Panc1 (cell line): ENCODE measurements at regions of chr7 and their contacts with region 1.

Region 1: DNA sequence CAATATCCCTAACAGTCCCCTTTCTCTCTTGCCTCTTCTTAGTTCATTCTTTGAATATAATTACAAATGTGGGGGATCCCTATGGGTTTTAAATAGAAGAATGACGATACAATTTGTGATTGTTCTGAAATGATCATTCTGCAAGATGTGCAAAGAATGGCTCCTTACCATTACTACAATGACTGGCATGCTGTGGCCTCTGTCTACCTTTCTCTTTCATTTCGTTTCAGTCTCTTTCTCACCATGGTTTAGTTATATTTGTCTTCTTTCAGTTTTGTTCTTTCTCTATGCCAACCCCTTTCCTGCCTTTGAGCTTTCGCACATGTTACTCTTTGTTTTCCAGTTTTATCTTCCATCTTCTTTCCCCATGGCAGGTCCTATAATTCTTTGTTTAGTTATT is 176.5 kb downstream of the SUGCT start:
- DNase-seq: no peak
- ATAC-seq: no peak
- H3K4me3 ChIP-seq: no peak overlapping the region
- H3K27ac ChIP-seq: no peak overlapping the region
- H3K4me1 ChIP-seq: no peaks in the 10 kb centered on the region
- H3K27me3 ChIP-seq: no peaks in the 10 kb centered on the region
- CTCF ChIP-seq: no peak

Region 2: DNA sequence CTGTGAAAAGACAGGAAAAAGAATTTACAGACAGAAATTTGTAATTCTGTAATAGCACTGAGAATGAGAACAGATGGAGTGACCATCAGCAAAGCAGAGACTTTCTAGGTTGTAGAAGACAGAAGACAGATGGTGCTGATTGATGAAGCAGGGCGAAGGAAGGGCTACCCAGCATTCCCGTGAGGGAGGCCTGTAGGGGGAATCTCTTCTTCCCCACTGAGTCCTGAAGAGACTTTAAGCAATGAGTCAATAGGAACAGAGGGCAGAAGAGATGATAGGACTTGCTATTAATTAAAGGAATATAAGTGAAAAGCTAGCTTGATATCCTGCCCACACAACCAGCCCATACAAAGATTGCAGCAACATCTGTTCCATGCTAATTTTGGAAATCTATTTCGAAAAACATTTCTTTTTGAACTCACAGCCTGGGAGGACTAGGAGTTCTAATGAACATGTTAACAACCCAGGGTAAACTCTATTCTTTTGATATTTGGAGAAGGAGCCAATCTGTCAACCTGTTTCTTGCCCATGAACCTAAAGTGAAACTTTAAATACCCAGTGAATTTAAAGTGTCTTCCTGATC is 643.9 kb before region 1 on chr7:
- CTCF ChIA-PET with region 1: no interaction called
- POLR2A ChIA-PET with region 1: no interaction called
- in situ Hi-C with region 1: no loop called
- intact Hi-C with region 1: no loop called
- DNase-seq: no peak
- ATAC-seq: no peak
- H3K4me3 ChIP-seq: no peak overlapping the region
- H3K27ac ChIP-seq: no peak overlapping the region
- H3K4me1 ChIP-seq: no peaks in the 10 kb centered on the region
- H3K27me3 ChIP-seq: no peaks in the 10 kb centered on the region
- CTCF ChIP-seq: no peak

Region 3: GRCh38 chr7:40057292-40057691 is 254.0 kb before region 1 on chr7:
- CTCF ChIA-PET with region 1: no interaction called
- POLR2A ChIA-PET with region 1: no interaction called
- in situ Hi-C with region 1: no loop called
- intact Hi-C with region 1: no loop called
- DNase-seq: no peak
- ATAC-seq: no peak
- H3K4me3 ChIP-seq: no peak overlapping the region
- H3K27ac ChIP-seq: no peak overlapping the region
- H3K4me1 ChIP-seq: no peaks in the 10 kb centered on the region
- H3K27me3 ChIP-seq: no peaks in the 10 kb centered on the region
- CTCF ChIP-seq: no peak

Region 4: DNA sequence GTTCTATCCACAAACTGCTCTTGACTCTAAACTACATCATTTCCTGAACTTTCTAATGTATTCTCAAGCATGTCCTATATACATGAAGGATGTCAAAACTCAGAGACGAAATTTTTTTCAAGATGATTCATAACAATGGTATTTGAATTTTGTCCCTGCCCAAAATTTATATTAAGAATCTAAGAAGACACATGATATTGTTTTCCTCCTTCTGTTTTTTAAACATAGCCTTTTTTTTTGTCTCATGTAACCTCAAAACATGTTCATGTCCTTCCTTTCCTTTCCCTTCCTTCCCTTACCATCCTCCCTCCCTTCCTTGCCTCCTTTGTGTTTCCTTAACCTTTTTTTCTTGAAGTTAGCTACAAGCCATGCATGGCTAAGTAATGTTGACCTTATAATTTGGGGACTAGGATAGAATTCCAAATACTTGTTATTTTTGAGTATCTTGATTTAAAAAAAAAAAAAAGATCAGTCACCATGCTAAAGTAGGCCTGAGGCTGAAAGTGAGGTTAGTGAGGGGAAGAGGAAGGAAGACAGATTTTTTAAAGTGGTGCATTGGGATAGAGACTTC is 13.5 kb before region 1 on chr7:
- CTCF ChIA-PET with region 1: no interaction called
- POLR2A ChIA-PET with region 1: interaction called, 10 read pairs
- in situ Hi-C with region 1: no loop called
- intact Hi-C with region 1: no loop called
- DNase-seq: no peak
- ATAC-seq: no peak
- H3K4me3 ChIP-seq: no peak overlapping the region
- H3K27ac ChIP-seq: no peak overlapping the region
- H3K4me1 ChIP-seq: no peaks in the 10 kb centered on the region
- H3K27me3 ChIP-seq: no peaks in the 10 kb centered on the region
- CTCF ChIP-seq: no peak

Region 5: GRCh38 chr7:40560672-40561071 is 249.4 kb after region 1 on chr7:
- CTCF ChIA-PET with region 1: no interaction called
- POLR2A ChIA-PET with region 1: no interaction called
- in situ Hi-C with region 1: no loop called
- intact Hi-C with region 1: no loop called
- DNase-seq: no peak
- ATAC-seq: no peak
- H3K4me3 ChIP-seq: no peak overlapping the region
- H3K27ac ChIP-seq: no peak overlapping the region
- H3K4me1 ChIP-seq: no peaks in the 10 kb centered on the region
- H3K27me3 ChIP-seq: no peaks in the 10 kb centered on the region
- CTCF ChIP-seq: no peak

Region 6: GRCh38 chr7:40644454-40645188 is 333.3 kb after region 1 on chr7:
- CTCF ChIA-PET with region 1: no interaction called
- POLR2A ChIA-PET with region 1: no interaction called
- in situ Hi-C with region 1: no loop called
- intact Hi-C with region 1: no loop called
- DNase-seq: no peak
- ATAC-seq: no peak
- H3K4me3 ChIP-seq: no peak overlapping the region
- H3K27ac ChIP-seq: no peak overlapping the region
- H3K4me1 ChIP-seq: no peaks in the 10 kb centered on the region
- H3K27me3 ChIP-seq: no peaks in the 10 kb centered on the region
- CTCF ChIP-seq: no peak